ENCODE measurements at regions of chr16 and their contacts with region 1.

Region 1: GRCh38 chr16:84754353-84754856 is 54.6 kb downstream of the USP10 start:
- DNase-seq: peak in 1 of 2 donors; percentile 66
- H3K4me3 ChIP-seq: peak overlapping the region in 2 of 3 donors; percentile 1 to 11
- H3K27ac ChIP-seq: no peak overlapping the region
- H3K4me1 ChIP-seq: peaks cover 0 to 5% of the 10 kb centered on the region in 2 donors
- H3K27me3 ChIP-seq: no peaks in the 10 kb centered on the region
- CTCF ChIP-seq: peak; percentile 83 to 95 (median 92)
- POLR2A ChIP-seq: no peak

Region 2: DNA sequence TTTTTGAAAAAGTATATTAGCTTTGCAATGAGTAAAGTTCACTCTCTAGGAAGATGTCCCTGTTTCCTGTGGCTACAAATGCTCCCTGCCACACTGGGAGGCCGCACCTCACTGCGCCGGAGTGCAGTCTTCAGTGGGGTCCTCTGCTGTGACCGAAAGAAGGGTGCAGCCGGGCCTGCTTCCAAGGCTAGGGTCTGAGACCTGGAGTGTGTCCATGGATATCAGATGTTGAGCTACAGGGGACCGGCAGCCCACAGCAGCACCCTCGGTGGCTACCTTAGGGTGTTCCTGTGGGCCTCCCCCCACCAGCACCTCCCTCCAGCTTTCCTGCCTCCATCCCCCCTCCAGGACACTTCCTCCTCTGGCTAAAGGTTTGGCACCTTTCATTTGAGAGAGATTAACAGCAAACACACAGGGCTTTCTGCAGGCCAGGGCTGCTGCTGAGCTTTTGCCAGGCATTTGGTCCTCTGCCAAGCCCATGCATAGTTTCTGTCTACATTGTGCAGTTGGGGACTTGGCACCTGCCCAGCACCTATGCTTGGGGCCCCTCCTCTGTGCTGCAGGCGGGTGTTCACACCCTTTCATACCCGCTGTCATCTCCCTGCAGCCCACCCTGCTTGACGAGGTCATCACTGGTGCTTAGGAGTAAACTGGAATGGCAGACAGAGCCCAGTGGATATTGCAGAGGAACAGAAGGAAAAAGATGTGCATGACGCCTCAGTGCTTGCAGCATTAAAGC is 31.6 kb after region 1 on chr16:
- intact Hi-C with region 1: no loop called
- DNase-seq: no peak
- H3K4me3 ChIP-seq: no peak overlapping the region
- H3K27ac ChIP-seq: no peak overlapping the region
- H3K4me1 ChIP-seq: peaks cover 0 to 7% of the 10 kb centered on the region in 2 donors
- H3K27me3 ChIP-seq: no peaks in the 10 kb centered on the region
- CTCF ChIP-seq: no peak
- POLR2A ChIP-seq: no peak

Region 3: DNA sequence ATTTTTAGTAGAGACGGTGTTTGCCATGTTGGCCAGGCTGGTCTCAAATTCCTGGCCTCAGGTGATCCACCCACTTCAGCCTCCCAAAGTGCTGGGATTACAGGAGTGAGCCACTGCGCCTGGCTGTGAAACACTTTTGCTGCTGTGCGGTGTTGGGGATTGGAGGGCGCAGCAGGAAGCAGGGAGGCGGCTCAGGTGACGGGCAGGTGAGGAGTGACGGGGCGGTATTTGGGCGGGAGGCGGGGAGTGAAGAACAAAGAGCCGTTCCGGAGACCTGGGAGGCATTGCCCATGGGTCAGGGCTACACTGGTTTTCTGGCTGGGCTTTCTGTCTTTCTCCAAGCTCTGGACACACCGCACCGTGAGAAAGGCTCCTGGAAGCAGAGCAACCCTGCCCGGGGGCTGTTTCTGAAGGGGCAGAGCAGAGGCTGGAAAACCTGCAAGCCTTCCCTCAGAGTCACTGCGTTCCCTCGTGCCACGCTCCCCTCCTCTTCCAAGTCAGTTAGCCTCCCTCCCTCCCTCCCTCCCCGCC is 87.4 kb after region 1 on chr16:
- intact Hi-C with region 1: no loop called
- DNase-seq: peak; percentile 72 to 80
- H3K4me3 ChIP-seq: peak overlapping the region in 2 of 3 donors; percentile 38 to 52
- H3K27ac ChIP-seq: peak overlapping the region; percentile 83 to 87
- H3K4me1 ChIP-seq: no peaks in the 10 kb centered on the region
- H3K27me3 ChIP-seq: no peaks in the 10 kb centered on the region
- CTCF ChIP-seq: no peak
- POLR2A ChIP-seq: no peak

Region 4: DNA sequence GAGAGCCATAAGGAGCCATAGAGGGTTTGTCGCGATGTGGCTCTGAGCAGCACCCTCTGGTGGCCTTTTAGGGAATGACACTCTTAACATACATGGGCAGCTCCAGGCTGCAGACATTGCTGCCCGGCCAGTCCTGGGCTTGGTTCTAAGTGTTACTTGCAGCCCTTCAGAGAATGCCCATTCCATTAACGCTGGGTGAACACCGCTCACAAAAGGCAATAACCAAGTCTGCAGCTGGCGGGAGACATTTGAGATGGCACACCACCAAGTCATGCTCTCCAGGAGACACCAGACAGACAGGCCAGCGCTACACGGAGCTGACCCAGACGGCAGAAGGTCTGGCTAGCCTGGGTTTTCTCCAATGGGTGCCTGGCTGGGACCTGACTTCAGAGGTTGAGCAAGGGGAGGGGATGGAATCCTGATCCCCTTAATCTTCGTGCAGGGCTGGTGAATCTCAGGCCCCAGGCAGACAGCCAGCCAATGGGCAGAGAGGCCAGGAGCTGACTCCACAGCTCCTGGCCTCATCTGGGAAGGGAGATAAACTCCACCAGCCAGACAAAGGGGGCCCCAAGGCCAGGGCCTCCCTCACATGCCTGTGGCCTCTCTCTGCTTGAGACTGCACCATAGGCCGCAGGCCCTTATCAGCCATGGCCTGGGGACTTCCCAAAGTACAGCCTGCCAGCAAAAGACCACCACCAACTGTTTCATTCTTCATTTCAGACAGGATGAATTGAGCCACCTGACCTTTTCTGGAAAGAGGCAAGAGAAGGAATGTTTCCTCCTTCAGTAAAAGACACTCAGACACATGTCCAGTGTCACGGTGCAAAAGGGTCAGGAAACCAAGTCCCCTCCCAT is 198.2 kb after region 1 on chr16:
- intact Hi-C with region 1: loop called (anchors 10 kb)
- DNase-seq: peak; percentile 69 to 71
- H3K4me3 ChIP-seq: no peak overlapping the region
- H3K27ac ChIP-seq: no peak overlapping the region
- H3K4me1 ChIP-seq: no peaks in the 10 kb centered on the region
- H3K27me3 ChIP-seq: no peaks in the 10 kb centered on the region
- CTCF ChIP-seq: peak; percentile 86 to 95 (median 88)
- POLR2A ChIP-seq: no peak

Region 5: DNA sequence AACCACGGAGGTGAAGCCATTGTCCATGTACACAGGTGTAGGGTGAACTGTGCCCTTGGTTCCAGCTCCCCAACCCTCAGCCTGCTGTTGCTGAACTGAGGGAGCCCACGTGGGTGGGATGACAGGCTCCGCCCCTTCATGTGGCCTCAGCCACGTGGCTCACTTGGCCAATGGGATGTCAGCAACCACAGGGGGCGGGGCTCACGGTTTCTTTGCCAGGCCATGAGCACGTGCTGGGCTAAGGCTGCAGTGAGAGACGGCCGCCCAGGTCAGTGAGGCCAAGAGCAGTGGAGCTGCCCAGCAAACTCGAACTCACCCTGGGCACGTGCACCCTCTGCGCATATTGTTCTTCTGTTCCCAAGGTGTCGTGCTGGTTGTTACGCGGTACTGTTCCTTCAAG is 1427.1 kb after region 1 on chr16:
- intact Hi-C with region 1: no loop called
- DNase-seq: no peak
- H3K4me3 ChIP-seq: no peak overlapping the region
- H3K27ac ChIP-seq: no peak overlapping the region
- H3K4me1 ChIP-seq: no peaks in the 10 kb centered on the region
- H3K27me3 ChIP-seq: peaks cover 0 to 27% of the 10 kb centered on the region in 2 donors
- CTCF ChIP-seq: no peak
- POLR2A ChIP-seq: no peak

Measured in breast epithelium (tissue), 4 donors.